Esophagus muscularis mucosa (tissue), 4 donors: ENCODE measurements at regions of chr13 and their contacts with region 1.

Region 1: GRCh38 chr13:43331672-43332071 is 308.3 kb downstream of the DNAJC15 start:
- DNase-seq: no peak
- H3K4me3 ChIP-seq: no peak overlapping the region
- H3K27ac ChIP-seq: peak overlapping the region in 3 of 4 donors; percentile 24 to 81 (median 41)
- H3K4me1 ChIP-seq: peaks cover 8 to 91% (median 81%) of the 10 kb centered on the region in 4 donors
- H3K27me3 ChIP-seq: no peaks in the 10 kb centered on the region
- CTCF ChIP-seq: no peak
- EP300 ChIP-seq: no peak
- POLR2A ChIP-seq: no peak

Region 2: DNA sequence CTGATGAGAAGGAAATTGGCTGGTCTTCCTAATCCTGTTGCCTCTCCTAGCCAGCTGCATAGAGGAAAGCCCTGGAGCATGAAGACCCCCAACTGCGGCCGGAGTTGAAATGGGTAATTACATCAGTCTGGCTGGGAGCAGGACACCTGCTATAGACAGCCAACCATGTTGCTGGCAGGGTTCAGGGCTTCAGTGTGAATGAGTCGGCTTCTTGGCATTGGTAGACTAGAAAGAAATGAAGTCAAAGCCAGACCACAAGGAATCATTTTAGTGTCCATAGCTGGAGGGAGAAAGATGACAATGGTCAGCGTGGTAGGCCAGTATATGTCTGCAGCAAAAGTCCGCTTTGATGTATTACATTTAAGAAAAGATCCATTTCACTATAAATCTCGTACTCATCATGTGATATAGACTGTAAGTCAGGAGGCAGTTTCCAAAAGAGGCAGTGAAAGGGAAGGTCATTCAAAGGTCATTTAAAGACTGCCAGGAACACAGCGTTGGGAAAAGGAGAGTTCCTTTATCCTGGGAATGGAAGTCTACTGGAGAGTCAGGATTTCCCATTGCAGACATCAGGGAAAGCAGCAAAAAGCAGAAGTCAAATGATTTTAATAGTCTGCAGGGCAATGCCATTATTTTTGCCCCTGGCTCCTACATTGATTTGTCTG is 45.6 kb before region 1 on chr13:
- intact Hi-C with region 1: loop called (anchors 5 kb)
- DNase-seq: no peak
- H3K4me3 ChIP-seq: no peak overlapping the region
- H3K27ac ChIP-seq: peak overlapping the region; percentile 8 to 65 (median 38)
- H3K4me1 ChIP-seq: peaks cover 13 to 49% (median 34%) of the 10 kb centered on the region in 4 donors
- H3K27me3 ChIP-seq: no peaks in the 10 kb centered on the region
- CTCF ChIP-seq: no peak
- EP300 ChIP-seq: no peak
- POLR2A ChIP-seq: no peak